ENCODE measurements at regions of chr9 and their contacts with region 1.

Region 1: GRCh38 chr9:3863111-3863528 is 337.3 kb upstream of the RFX3 start:
- DNase-seq: no peak
- ATAC-seq: no peak
- H3K4me3 Mint-ChIP-seq: no peak overlapping the region
- H3K27ac Mint-ChIP-seq: no peak overlapping the region
- H3K4me1 Mint-ChIP-seq: no peaks in the 10 kb centered on the region
- H3K27me3 Mint-ChIP-seq: peaks cover 12% of the 10 kb centered on the region
- CTCF ChIP-seq: no peak

Region 2: GRCh38 chr9:3692606-3693005 is 170.5 kb before region 1 on chr9:
- CTCF ChIA-PET with region 1: no interaction called
- POLR2A ChIA-PET with region 1: no interaction called
- intact Hi-C with region 1: no loop called
- DNase-seq: no peak
- ATAC-seq: no peak
- H3K4me3 Mint-ChIP-seq: no peak overlapping the region
- H3K27ac Mint-ChIP-seq: no peak overlapping the region
- H3K4me1 Mint-ChIP-seq: no peaks in the 10 kb centered on the region
- H3K27me3 Mint-ChIP-seq: peaks cover 5% of the 10 kb centered on the region
- CTCF ChIP-seq: no peak

Region 3: DNA sequence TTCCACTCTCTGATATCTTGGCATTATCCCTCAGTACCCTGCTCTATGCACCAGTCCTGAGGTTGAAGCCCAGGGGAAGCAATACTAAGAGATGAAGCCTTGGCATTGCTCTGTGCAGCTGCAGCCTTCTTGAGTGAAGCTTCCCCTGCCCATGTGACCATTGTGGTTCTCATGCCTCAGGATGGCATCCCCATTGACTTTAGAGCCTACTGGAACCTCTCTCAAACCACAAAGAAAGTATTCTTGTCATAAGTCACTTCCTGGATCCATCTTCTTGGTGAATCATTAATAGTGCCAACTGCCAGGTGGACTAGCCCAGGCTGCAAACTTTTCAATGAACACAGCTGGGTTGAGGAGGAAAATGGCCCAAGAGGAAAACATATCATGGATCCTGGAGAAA is 53.4 kb before region 1 on chr9:
- CTCF ChIA-PET with region 1: no interaction called
- POLR2A ChIA-PET with region 1: no interaction called
- intact Hi-C with region 1: loop called (anchors 10 kb)
- DNase-seq: no peak
- ATAC-seq: no peak
- H3K4me3 Mint-ChIP-seq: no peak overlapping the region
- H3K27ac Mint-ChIP-seq: no peak overlapping the region
- H3K4me1 Mint-ChIP-seq: no peaks in the 10 kb centered on the region
- H3K27me3 Mint-ChIP-seq: peaks cover 15% of the 10 kb centered on the region
- CTCF ChIP-seq: no peak

Region 4: GRCh38 chr9:3954331-3955304 is 91.5 kb after region 1 on chr9:
- CTCF ChIA-PET with region 1: no interaction called
- POLR2A ChIA-PET with region 1: no interaction called
- intact Hi-C with region 1: no loop called
- DNase-seq: peak; percentile 56
- ATAC-seq: peak; percentile 68
- H3K4me3 Mint-ChIP-seq: no peak overlapping the region
- H3K27ac Mint-ChIP-seq: no peak overlapping the region
- H3K4me1 Mint-ChIP-seq: peaks cover 4% of the 10 kb centered on the region
- H3K27me3 Mint-ChIP-seq: peaks cover 2% of the 10 kb centered on the region
- CTCF ChIP-seq: no peak